ENCODE measurements at regions of chr19 and their contacts with region 1.

Region 1: DNA sequence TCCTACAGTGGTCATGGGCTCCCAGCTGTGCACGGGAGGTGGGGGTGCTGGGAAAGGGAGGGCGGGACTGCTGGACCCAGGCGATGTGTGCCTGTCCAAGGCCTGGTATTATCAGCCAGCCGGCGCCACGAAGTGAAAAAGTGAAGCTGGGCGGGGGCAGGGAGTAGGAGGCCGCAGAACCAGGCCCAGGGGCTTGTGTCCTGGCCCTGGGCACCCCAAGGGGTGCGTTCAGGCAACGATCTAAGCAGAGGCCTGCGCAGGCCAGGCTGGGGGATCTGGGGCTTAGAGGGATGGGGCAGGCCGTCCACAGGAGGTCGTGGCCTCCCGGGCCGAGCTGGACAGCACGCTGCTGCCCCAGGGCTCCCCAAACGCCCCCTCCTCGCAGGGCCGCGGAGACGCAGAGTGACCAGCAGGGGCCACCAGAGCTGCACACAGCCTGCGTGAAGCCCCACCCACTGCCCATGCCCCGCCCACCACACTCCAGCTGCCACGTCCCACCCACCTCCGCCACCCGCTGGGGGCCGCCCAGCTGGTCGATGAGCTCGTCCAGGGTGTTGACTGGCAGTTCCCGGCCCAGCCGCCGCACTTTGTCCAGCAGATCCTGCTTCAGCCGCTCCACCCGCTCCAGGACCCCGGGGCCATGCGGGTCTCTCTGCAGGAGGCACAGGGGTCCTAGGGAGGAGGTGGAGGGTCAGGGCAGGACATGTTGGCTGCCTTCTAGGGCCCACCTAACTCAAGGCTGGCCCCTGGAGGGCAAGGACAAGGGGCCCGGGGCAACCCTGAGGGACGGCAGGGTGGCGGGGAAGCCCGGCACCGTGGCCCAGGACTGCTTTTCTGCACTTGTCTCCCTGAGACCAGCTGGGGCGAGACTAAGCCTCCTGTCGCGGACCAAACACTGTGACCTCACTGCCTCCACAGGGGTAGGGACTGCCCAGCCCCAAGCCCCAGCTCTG is 9.5 kb downstream of the GPX4 start:
- DNase-seq: peak; percentile 90 to 98 (median 96)

Region 2: DNA sequence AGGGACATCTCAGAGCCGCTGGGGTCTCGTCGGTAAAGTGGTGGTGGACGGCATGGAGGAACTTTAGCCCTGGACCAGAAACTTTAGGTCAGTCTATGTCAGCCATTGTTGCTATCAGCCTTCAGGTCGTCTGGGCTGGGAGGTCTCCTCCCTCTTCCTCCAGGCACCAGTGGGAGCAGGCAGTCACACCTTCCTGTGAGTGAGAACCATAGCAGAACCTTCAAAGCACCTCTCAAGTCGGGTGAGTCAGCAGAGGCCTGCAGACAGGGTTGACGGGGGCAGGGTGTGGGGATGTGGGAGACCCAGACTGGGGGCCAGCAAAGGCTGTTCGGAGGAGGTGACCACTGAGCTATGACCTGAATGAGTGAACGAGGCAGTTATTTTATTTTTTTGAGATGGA is 76.1 kb after region 1 on chr19:
- intact Hi-C with region 1: loop called (anchors 5 kb)
- DNase-seq: no peak

Measured in head of caudate nucleus (tissue), 42 donors.